Dorsolateral prefrontal cortex (tissue), 120 donors: ENCODE measurements at regions of chr17 and their contacts with region 1.

Region 1: GRCh38 chr17:45135192-45135977 is at the start of gene ACBD4:
- DNase-seq: peak; percentile 90 to 98 (median 94)
- H3K4me3 ChIP-seq: peak within 1 kb of the TSS; percentile 52 to 87 (median 73)
- H3K27ac ChIP-seq: peak within 1 kb of the TSS in 57 of 59 donors; percentile 7 to 92 (median 77)
- H3K27me3 ChIP-seq: no peaks in the 10 kb centered on the region
- CTCF ChIP-seq: peak; percentile 99 to 100 (median 100)
- total RNA-seq, gene ACBD4: 15.7 to 37.1 (median 23.9) TPM

Region 2: DNA sequence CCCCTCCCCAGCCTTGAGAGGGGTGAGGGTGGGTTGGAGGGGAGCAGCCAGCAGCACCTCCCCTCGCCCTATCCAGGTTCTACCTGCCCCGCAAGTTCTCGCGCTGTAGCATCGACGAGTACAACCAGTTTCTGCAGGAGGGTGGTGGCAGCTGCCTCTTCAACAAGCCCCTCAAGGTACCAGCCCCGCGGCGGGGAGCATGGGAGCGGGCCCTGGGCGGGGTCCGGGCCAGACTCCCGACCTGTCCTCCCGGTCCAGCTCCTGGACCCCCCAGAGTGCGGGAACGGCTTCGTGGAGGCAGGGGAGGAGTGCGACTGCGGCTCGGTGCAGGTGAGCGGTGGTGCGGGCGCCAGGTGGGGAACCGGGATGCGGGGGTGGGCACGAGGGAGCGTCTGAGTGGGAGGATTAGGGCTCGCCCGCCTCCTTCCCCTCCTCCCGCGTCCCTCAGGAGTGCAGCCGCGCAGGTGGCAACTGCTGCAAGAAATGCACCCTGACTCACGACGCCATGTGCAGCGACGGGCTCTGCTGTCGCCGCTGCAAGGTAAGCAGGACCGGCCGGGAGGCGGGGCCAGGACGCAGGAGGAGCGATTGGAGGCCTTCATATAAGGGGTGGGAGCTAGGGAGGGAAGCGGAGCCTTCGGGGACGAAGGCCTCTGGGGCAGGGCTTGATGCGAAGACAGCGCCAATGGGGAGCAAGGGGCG is 360.1 kb before region 1 on chr17:
- intact Hi-C with region 1: loop called (anchors 5 to 10 kb)
- DNase-seq: peak; percentile 91 to 100 (median 96)
- H3K4me3 ChIP-seq: peak overlapping the region; percentile 32 to 90 (median 68)
- H3K27ac ChIP-seq: peak overlapping the region in 33 of 59 donors; percentile 1 to 76 (median 51)
- H3K27me3 ChIP-seq: no peaks in the 10 kb centered on the region
- CTCF ChIP-seq: peak in 31 of 56 donors; percentile 2 to 56 (median 19)

Region 3: GRCh38 chr17:45092932-45093430 is 42.4 kb before region 1 on chr17:
- intact Hi-C with region 1: loop called (anchors 5 kb)
- DNase-seq: peak; percentile 49 to 97 (median 94)
- H3K4me3 ChIP-seq: peak overlapping the region in 11 of 59 donors; percentile 4 to 37 (median 19)
- H3K27ac ChIP-seq: peak overlapping the region; percentile 65 to 95 (median 87)
- H3K27me3 ChIP-seq: no peaks in the 10 kb centered on the region
- CTCF ChIP-seq: peak in 16 of 56 donors; percentile 5 to 52 (median 25)

Region 4: GRCh38 chr17:45098869-45099616 is 36.3 kb before region 1 on chr17:
- intact Hi-C with region 1: loop called (anchors 5 kb)
- DNase-seq: peak; percentile 78 to 96 (median 86)
- H3K4me3 ChIP-seq: peak overlapping the region in 3 of 59 donors; percentile 8 to 15 (median 11)
- H3K27ac ChIP-seq: peak overlapping the region in 56 of 59 donors; percentile 11 to 90 (median 77)
- H3K27me3 ChIP-seq: no peaks in the 10 kb centered on the region
- CTCF ChIP-seq: peak; percentile 51 to 90 (median 81)

Region 5: DNA sequence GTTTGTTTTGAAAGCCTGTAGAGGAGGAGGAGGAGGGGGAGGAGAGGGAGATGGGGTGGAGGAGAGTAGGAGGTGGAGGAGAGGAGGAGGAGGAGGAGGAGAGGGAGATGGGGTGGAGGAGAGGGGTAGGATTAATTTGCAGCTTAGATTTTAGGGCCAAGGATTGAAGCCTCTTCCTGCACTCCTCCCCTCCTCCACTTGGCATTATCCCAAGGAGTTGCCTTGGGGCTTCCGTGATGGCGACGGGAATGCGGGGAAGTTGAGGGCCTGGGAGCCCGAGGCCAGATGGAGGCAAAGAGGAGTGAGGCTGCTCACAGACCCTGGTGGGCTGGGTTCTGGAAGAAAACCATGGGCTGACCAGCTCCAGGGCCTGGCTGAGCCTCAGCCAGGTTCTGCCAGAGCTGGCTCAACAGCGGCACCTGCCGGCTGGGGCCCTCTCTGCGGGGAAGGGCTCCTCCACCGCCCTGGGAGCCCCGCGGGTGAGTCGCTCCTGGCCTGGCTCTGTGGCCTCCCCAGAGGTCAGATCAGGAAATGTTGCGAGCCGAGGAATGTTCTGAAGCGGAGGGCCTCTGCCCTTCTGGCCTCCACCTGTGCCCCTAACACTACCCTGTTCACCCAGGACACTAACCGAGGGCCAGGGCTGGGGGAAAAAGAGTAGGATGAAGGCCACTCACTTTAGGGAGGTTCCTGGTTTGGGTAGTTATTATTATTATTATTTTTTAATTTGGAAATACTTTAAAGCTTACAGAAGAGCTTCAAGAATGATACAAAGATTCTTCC is 62.4 kb after region 1 on chr17:
- intact Hi-C with region 1: loop called (anchors 1 to 2 kb)
- DNase-seq: peak; percentile 80 to 92 (median 86)
- H3K4me3 ChIP-seq: peak overlapping the region in 26 of 59 donors; percentile 0 to 43 (median 29)
- H3K27ac ChIP-seq: peak overlapping the region in 47 of 59 donors; percentile 2 to 77 (median 50)
- H3K27me3 ChIP-seq: no peaks in the 10 kb centered on the region
- CTCF ChIP-seq: peak; percentile 93 to 100 (median 99)

Region 6: GRCh38 chr17:45385331-45385997 is 250.1 kb after region 1 on chr17:
- intact Hi-C with region 1: loop called in 1 of 2 experiments (anchors 10 kb)
- DNase-seq: peak; percentile 74 to 91 (median 81)
- H3K4me3 ChIP-seq: no peak overlapping the region
- H3K27ac ChIP-seq: peak overlapping the region in 29 of 59 donors; percentile 1 to 73 (median 44)
- H3K27me3 ChIP-seq: peaks cover 0 to 16% (median 0%) of the 10 kb centered on the region in 45 donors
- CTCF ChIP-seq: peak; percentile 92 to 100 (median 98)